A549 (cell line): ENCODE measurements at regions of chr15 and their contacts with region 1.

Region 1: DNA sequence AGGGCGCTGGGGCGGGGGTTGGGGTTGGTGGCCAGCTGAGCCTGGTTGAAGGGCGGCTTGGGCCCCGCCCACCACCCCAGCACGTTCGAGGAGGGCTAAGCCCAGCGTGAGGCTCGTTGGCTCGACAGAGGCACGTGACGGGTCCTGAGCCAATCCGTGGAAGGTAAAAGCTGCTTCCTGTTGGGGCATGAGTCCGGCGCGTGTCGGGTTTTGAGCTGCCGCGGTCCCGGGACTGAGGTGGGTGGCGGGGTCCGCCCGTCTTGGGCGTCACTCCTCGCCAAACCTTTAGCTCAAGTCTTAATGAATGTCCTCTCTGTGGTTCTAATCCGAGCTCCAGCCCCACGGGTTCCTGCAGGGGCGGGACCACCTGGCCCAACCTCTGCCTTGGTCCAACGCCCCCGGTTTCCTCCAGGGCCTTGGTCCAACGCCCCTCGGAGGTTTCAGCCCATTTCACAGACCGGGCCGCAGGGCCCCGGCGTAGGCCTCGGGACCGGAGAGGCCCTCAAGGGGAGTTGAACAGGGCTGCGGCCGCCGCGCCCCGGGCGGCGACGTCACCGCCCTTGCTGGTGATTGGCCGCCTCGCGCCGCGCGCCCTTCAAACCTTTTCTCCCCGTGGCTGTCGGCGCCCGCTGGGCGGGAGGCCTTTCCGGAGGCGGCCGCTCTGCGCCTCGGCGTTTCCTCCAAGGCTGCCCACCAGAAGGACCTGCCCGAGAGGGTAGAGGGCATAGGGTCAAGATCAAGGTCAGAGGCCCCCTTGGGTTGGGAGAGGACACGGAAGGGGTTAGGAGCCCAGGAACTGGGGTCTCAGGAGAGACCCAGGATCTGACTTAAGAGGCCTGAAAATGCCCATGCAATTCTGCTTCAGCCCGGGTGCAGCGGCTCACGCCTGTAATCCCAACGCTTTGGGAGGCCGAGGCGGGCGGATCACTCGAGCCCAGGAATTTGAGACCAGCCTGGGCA is at the start of gene RCCD1:
- DNase-seq: peak; percentile 98 to 100
- ATAC-seq: peak; percentile 84 to 94
- H3K4me3 ChIP-seq: peak within 1 kb of the TSS; percentile 83
- H3K27ac ChIP-seq: peak within 1 kb of the TSS; percentile 95 to 98
- H3K4me1 ChIP-seq: peaks cover 19% of the 10 kb centered on the region
- CTCF ChIP-seq: no peak
- EP300 ChIP-seq: no peak
- POLR2A ChIP-seq: peak; percentile 88
- RAD21 ChIP-seq: no peak
- polyA plus RNA-seq, gene RCCD1: 22.8 and 25.3 TPM in 2 replicates

Region 2: DNA sequence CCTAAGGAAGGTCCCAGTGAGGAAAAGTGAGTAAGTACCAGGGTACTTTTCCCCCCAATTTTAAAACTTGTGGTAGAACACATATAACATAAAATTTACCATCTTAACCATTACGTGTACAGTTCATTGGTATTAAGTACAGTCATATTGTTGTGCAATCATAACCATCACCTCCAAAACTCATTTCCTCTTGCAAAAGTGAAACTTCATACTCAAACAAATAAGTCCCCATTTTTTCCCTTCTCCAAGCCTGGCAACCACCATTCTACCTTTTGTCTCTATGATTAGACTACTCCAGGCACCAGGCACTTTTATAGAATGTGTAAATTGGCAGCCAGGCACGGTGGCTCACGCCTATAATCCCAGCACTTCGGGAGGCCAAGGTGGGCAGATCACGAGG is 27.1 kb after region 1 on chr15:
- CTCF ChIA-PET with region 1: interaction called, 247 read pairs
- POLR2A ChIA-PET with region 1: interaction called, 3 read pairs
- DNase-seq: no peak
- ATAC-seq: no peak
- H3K4me3 ChIP-seq: no peak overlapping the region
- H3K27ac ChIP-seq: no peak overlapping the region
- H3K4me1 ChIP-seq: peaks cover 12% of the 10 kb centered on the region
- CTCF ChIP-seq: no peak
- EP300 ChIP-seq: no peak
- POLR2A ChIP-seq: no peak
- RAD21 ChIP-seq: no peak

Region 3: GRCh38 chr15:91007266-91007665 is 52.3 kb after region 1 on chr15:
- CTCF ChIA-PET with region 1: interaction called, 10 read pairs
- POLR2A ChIA-PET with region 1: no interaction called
- DNase-seq: no peak
- ATAC-seq: no peak
- H3K4me3 ChIP-seq: no peak overlapping the region
- H3K27ac ChIP-seq: no peak overlapping the region
- H3K4me1 ChIP-seq: no peaks in the 10 kb centered on the region
- CTCF ChIP-seq: no peak
- EP300 ChIP-seq: no peak
- POLR2A ChIP-seq: no peak
- RAD21 ChIP-seq: no peak

Region 4: GRCh38 chr15:91027677-91028076 is 72.7 kb after region 1 on chr15:
- CTCF ChIA-PET with region 1: interaction called, 71 read pairs
- POLR2A ChIA-PET with region 1: no interaction called
- DNase-seq: no peak
- ATAC-seq: no peak
- H3K4me3 ChIP-seq: no peak overlapping the region
- H3K27ac ChIP-seq: no peak overlapping the region
- H3K4me1 ChIP-seq: peaks cover 5% of the 10 kb centered on the region; the same call in 1 of the 3 replicates
- CTCF ChIP-seq: no peak
- EP300 ChIP-seq: no peak
- POLR2A ChIP-seq: no peak
- RAD21 ChIP-seq: no peak

Region 5: GRCh38 chr15:91040856-91041255 is 85.9 kb after region 1 on chr15:
- CTCF ChIA-PET with region 1: interaction called, 23 read pairs
- POLR2A ChIA-PET with region 1: no interaction called
- DNase-seq: no peak
- ATAC-seq: no peak
- H3K4me3 ChIP-seq: no peak overlapping the region
- H3K27ac ChIP-seq: no peak overlapping the region
- H3K4me1 ChIP-seq: no peaks in the 10 kb centered on the region
- CTCF ChIP-seq: no peak
- EP300 ChIP-seq: no peak
- POLR2A ChIP-seq: no peak
- RAD21 ChIP-seq: no peak

Region 6: GRCh38 chr15:91065505-91065904 is 110.5 kb after region 1 on chr15:
- CTCF ChIA-PET with region 1: no interaction called
- POLR2A ChIA-PET with region 1: no interaction called
- DNase-seq: no peak
- ATAC-seq: no peak
- H3K4me3 ChIP-seq: no peak overlapping the region
- H3K27ac ChIP-seq: no peak overlapping the region
- H3K4me1 ChIP-seq: no peaks in the 10 kb centered on the region
- CTCF ChIP-seq: no peak
- EP300 ChIP-seq: no peak
- POLR2A ChIP-seq: no peak
- RAD21 ChIP-seq: no peak

Region 7: DNA sequence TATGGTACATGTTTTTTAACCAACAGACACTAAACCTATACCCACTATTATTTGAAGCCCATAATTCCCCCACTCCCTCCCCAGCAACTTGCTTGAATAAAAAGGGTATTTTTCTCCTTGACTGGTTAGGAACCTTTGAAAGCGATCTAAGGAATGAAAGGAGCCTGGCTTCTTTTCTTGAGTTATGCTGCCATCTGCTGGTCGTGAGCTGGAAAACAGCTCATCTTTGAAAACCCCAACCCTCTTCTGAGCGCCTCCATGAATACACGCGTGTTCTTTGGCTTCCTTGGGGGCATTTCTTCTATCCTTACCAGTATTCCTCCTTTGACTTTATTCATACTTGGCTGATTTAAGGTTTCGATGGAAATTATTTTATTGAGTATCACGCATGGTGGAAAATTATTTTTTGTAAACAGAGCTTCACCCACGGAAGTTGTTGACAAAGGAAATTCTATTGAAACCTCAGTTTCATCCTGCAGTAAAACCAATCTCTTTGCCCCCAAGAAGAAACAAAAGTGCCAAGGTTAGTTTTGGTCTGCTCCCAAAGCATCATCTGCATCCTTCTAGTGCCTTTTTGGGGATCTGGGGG is 316.7 kb after region 1 on chr15:
- CTCF ChIA-PET with region 1: interaction called, 72 read pairs
- POLR2A ChIA-PET with region 1: interaction called, 3 read pairs
- DNase-seq: peak; percentile 51 to 76
- ATAC-seq: peak; percentile 86 to 90; a peak in 5 of 6 replicates
- H3K4me3 ChIP-seq: no peak overlapping the region
- H3K27ac ChIP-seq: no peak overlapping the region
- H3K4me1 ChIP-seq: no peaks in the 10 kb centered on the region
- CTCF ChIP-seq: peak; percentile 97
- EP300 ChIP-seq: no peak
- POLR2A ChIP-seq: no peak
- RAD21 ChIP-seq: peak; percentile 95 to 96